ENCODE measurements at regions of chr11 and their contacts with region 1.

Region 1: GRCh38 chr11:3412837-3413236 is 33.9 kb upstream of the ZNF195 start:
- DNase-seq: no peak
- ATAC-seq: no peak
- H3K4me3 ChIP-seq: no peak overlapping the region
- H3K27ac ChIP-seq: no peak overlapping the region
- H3K4me1 ChIP-seq: no peaks in the 10 kb centered on the region
- H3K27me3 ChIP-seq: no peaks in the 10 kb centered on the region
- CTCF ChIP-seq: no peak

Region 2: DNA sequence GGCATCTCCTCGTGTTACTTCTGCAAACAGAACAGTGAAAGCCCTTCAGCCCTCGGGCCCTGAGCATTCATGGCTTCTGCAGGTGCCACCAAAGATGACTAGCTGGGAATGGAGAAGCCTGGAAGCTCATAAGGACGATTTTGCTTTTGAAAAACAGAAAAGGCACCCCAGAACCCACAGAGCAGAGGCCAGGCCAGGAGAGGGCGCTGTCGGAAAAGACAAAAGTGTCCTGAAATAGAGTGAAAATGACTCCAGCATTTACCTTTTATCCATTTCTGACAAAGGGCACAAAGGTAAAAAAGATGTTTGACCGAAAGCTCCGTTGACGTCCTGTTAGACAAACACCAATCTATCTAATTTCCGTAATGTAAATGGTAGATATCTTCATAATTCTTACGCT is 71.5 kb before region 1 on chr11:
- CTCF ChIA-PET with region 1: interaction called, 32 read pairs
- POLR2A ChIA-PET with region 1: no interaction called
- in situ Hi-C with region 1: no loop called
- intact Hi-C with region 1: no loop called
- DNase-seq: peak; percentile 28
- ATAC-seq: peak; percentile 66
- H3K4me3 ChIP-seq: no peak overlapping the region
- H3K27ac ChIP-seq: no peak overlapping the region
- H3K4me1 ChIP-seq: peaks cover 6% of the 10 kb centered on the region; the same call in 1 of the 2 replicates
- H3K27me3 ChIP-seq: peaks cover 34% of the 10 kb centered on the region
- CTCF ChIP-seq: peak; percentile 94

Region 3: GRCh38 chr11:3382613-3383275 is 30.1 kb before region 1 on chr11:
- CTCF ChIA-PET with region 1: interaction called, 11 read pairs
- POLR2A ChIA-PET with region 1: no interaction called
- in situ Hi-C with region 1: no loop called
- intact Hi-C with region 1: no loop called
- DNase-seq: no peak
- ATAC-seq: no peak
- H3K4me3 ChIP-seq: no peak overlapping the region
- H3K27ac ChIP-seq: no peak overlapping the region
- H3K4me1 ChIP-seq: peaks cover 9% of the 10 kb centered on the region
- H3K27me3 ChIP-seq: no peaks in the 10 kb centered on the region
- CTCF ChIP-seq: peak; percentile 50

Region 4: GRCh38 chr11:3995949-3996554 is 583.2 kb after region 1 on chr11:
- CTCF ChIA-PET with region 1: no interaction called
- POLR2A ChIA-PET with region 1: no interaction called
- in situ Hi-C with region 1: no loop called
- intact Hi-C with region 1: no loop called
- DNase-seq: no peak
- ATAC-seq: peak; percentile 45; the same call in 1 of the 2 replicates
- H3K4me3 ChIP-seq: no peak overlapping the region
- H3K27ac ChIP-seq: no peak overlapping the region
- H3K4me1 ChIP-seq: no peaks in the 10 kb centered on the region
- H3K27me3 ChIP-seq: no peaks in the 10 kb centered on the region
- CTCF ChIP-seq: no peak

Measured in Panc1 (cell line).